Naive thymus-derived CD4-positive, alpha-beta T cell (primary cell): ENCODE measurements at regions of chr10 and their contacts with region 1.

Region 1: GRCh38 chr10:23095404-23095965 is at the start of gene MSRB2:
- DNase-seq: peak; percentile 34 to 70 (median 58)
- ATAC-seq: peak; percentile 83
- H3K4me3 ChIP-seq: peak within 1 kb of the TSS; percentile 66
- H3K4me3 Mint-ChIP-seq: peak within 1 kb of the TSS; percentile 85 to 100 (median 94)
- H3K27ac ChIP-seq: peak within 1 kb of the TSS; percentile 74
- H3K27ac Mint-ChIP-seq: peak within 1 kb of the TSS; percentile 84 to 97 (median 94)
- H3K4me1 ChIP-seq: peaks cover 13 to 20% of the 10 kb centered on the region in 2 donors
- H3K4me1 Mint-ChIP-seq: peaks cover 30 to 45% (median 43%) of the 10 kb centered on the region in 7 donors
- H3K27me3 ChIP-seq: no peaks in the 10 kb centered on the region
- H3K27me3 Mint-ChIP-seq: peaks cover 0 to 22% (median 0%) of the 10 kb centered on the region in 5 donors
- total RNA-seq, gene MSRB2: 4.7 to 11.9 (median 9.0) TPM

Region 2: GRCh38 chr10:21533467-21534279 is 1561.8 kb before region 1 on chr10 and contains the start of gene MLLT10:
- CTCF ChIA-PET with region 1: no interaction called
- POLR2A ChIA-PET with region 1: no interaction called
- intact Hi-C with region 1: loop called in 1 of 2 experiments (anchors 5 kb)
- DNase-seq: peak; percentile 90 to 96 (median 94)
- ATAC-seq: peak; percentile 95
- H3K4me3 ChIP-seq: peak within 1 kb of the TSS; percentile 81
- H3K4me3 Mint-ChIP-seq: peak within 1 kb of the TSS; percentile 90 to 98 (median 97)
- H3K27ac ChIP-seq: peak within 1 kb of the TSS; percentile 83
- H3K27ac Mint-ChIP-seq: peak within 1 kb of the TSS; percentile 91 to 98 (median 97)
- H3K4me1 ChIP-seq: peaks cover 8 to 15% of the 10 kb centered on the region in 2 donors
- H3K4me1 Mint-ChIP-seq: peaks cover 14 to 36% (median 27%) of the 10 kb centered on the region in 7 donors
- H3K27me3 ChIP-seq: no peaks in the 10 kb centered on the region
- H3K27me3 Mint-ChIP-seq: peaks cover 0 to 18% (median 0%) of the 10 kb centered on the region in 5 donors
- total RNA-seq, gene MLLT10: 50.0 to 74.2 (median 67.9) TPM

Region 3: GRCh38 chr10:22251751-22252223 is 843.7 kb before region 1 on chr10:
- CTCF ChIA-PET with region 1: no interaction called
- POLR2A ChIA-PET with region 1: no interaction called
- intact Hi-C with region 1: loop called (anchors 2 to 10 kb)
- DNase-seq: peak in 8 of 9 donors; percentile 48 to 76 (median 73)
- ATAC-seq: peak; percentile 73
- H3K4me3 ChIP-seq: peak overlapping the region; percentile 82
- H3K4me3 Mint-ChIP-seq: peak overlapping the region; percentile 90 to 100 (median 94)
- H3K27ac ChIP-seq: peak overlapping the region; percentile 87
- H3K27ac Mint-ChIP-seq: peak overlapping the region; percentile 95 to 100 (median 99)
- H3K4me1 ChIP-seq: peaks cover 0 to 4% of the 10 kb centered on the region in 2 donors
- H3K4me1 Mint-ChIP-seq: peaks cover 8 to 40% (median 38%) of the 10 kb centered on the region in 7 donors
- H3K27me3 ChIP-seq: no peaks in the 10 kb centered on the region
- H3K27me3 Mint-ChIP-seq: peaks cover 8 to 31% (median 10%) of the 10 kb centered on the region in 5 donors

Region 4: DNA sequence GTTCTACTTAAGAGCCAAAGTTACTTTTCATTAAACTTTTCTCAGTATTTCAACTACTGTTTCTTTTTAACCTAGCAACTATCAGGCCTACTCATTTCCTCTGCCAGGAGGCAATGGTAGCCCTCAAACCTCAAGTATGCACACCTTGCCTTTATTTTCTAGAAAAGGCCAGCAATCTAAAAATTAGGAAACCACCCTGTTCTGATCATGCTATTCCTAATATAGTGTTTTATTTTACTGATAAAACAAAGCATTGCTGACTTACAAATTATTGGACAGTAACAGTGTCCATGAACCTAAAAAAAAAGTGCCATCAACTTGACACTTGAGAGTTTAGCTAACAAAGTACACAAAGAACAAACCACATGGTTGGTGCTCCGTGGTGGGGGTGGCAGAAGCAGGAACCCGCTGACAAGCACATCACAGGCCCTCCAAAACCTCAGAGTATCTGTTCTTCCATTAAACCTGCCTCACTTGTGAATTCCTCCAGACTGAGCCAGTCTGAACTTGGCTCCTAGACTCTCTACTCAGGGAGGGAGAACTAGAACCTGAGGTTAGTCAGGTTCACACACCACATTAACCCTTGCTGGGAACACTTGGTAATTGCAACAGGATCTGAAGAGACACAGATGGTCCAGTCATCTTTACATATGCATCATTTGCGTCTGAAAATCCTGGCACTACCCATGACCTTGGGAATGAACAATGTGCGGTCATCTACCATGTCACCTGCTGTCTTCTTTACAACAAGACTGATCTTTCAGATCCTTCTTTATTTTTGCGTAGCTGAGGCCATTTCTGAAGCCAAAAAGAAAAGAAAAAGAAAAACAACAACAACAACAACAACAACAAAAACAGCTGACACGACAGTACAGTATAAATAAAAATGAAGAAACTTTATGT is 413.0 kb before region 1 on chr10:
- CTCF ChIA-PET with region 1: no interaction called
- POLR2A ChIA-PET with region 1: no interaction called
- intact Hi-C with region 1: loop called in 1 of 2 experiments (anchors 10 kb)
- DNase-seq: peak in 8 of 9 donors; percentile 43 to 81 (median 75)
- ATAC-seq: peak; percentile 79
- H3K4me3 ChIP-seq: peak overlapping the region; percentile 36
- H3K4me3 Mint-ChIP-seq: peak overlapping the region; percentile 67 to 94 (median 80)
- H3K27ac ChIP-seq: peak overlapping the region; percentile 73
- H3K27ac Mint-ChIP-seq: peak overlapping the region; percentile 90 to 100 (median 95)
- H3K4me1 ChIP-seq: peaks cover 86 to 94% of the 10 kb centered on the region in 2 donors
- H3K4me1 Mint-ChIP-seq: peaks cover 64 to 99% (median 91%) of the 10 kb centered on the region in 7 donors
- H3K27me3 ChIP-seq: no peaks in the 10 kb centered on the region
- H3K27me3 Mint-ChIP-seq: no peaks in the 10 kb centered on the region

Region 5: DNA sequence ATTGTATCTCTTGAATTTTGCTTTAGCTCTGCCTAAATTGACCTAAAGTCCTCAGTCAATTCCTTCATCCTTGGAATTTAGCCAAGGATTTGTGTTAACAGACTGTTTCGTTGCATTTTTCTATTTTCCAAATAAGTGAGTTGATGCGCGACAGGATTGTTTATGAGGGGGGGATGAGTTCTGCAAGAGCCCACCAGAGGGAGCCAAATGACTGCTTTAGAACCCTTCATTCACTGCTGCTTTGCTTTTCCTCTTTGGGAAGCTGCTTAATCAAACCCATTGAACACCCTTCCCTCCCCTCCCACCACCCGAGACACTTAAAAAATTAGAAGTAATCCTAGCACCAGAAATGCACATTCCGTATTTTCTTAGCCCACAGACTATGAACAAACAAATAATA is 62.9 kb after region 1 on chr10:
- CTCF ChIA-PET with region 1: no interaction called
- POLR2A ChIA-PET with region 1: no interaction called
- intact Hi-C with region 1: loop called in 1 of 2 experiments (anchors 2 kb)
- DNase-seq: peak in 7 of 9 donors; percentile 10 to 37 (median 30)
- ATAC-seq: peak; percentile 63
- H3K4me3 ChIP-seq: no peak overlapping the region
- H3K4me3 Mint-ChIP-seq: peak overlapping the region in 2 of 10 donors; percentile 24 to 30
- H3K27ac ChIP-seq: no peak overlapping the region
- H3K27ac Mint-ChIP-seq: no peak overlapping the region
- H3K4me1 ChIP-seq: no peaks in the 10 kb centered on the region
- H3K4me1 Mint-ChIP-seq: peaks cover 0 to 22% (median 0%) of the 10 kb centered on the region in 7 donors
- H3K27me3 ChIP-seq: no peaks in the 10 kb centered on the region
- H3K27me3 Mint-ChIP-seq: peaks cover 16 to 44% (median 34%) of the 10 kb centered on the region in 5 donors

Region 6: DNA sequence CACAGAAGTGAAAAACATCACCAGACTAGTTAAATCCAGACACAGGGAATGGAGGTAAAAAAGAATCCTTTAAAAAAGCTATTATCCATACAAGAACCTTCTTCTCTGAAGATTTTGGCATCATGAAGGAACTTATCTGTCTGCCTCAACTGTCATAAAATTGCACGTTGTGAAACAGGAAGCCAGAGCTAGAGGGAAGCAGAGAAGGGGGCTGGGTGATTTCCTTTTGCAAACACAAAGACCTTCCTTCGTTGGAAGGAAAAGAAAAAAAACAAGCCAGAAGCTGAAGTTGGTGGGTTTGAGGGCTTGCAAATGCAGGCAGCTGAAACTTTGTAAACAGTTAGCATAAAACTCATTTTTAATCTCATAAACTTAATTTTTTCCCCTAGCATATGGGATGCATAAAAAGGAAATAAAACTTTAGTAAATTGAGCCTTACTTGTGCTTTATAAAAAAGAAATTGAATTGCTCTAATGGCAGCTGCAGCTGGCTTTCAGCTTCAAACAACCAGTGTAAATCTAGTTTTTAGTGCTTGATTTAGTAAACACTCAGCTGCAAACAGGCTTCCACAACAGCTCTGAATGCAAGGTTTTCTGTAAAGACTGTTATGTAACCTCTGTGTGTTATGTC is 445.0 kb after region 1 on chr10:
- CTCF ChIA-PET with region 1: no interaction called
- POLR2A ChIA-PET with region 1: no interaction called
- intact Hi-C with region 1: loop called in 1 of 2 experiments (anchors 5 kb)
- DNase-seq: peak in 7 of 9 donors; percentile 11 to 56 (median 47)
- ATAC-seq: peak; percentile 41
- H3K4me3 ChIP-seq: no peak overlapping the region
- H3K4me3 Mint-ChIP-seq: peak overlapping the region; percentile 37 to 77 (median 74)
- H3K27ac ChIP-seq: peak overlapping the region; percentile 66
- H3K27ac Mint-ChIP-seq: peak overlapping the region; percentile 43 to 95 (median 87)
- H3K4me1 ChIP-seq: peaks cover 0 to 47% of the 10 kb centered on the region in 2 donors
- H3K4me1 Mint-ChIP-seq: peaks cover 31 to 76% (median 59%) of the 10 kb centered on the region in 7 donors
- H3K27me3 ChIP-seq: no peaks in the 10 kb centered on the region
- H3K27me3 Mint-ChIP-seq: no peaks in the 10 kb centered on the region